Endothelial cell of umbilical vein (primary cell): ENCODE measurements at regions of chr6 and their contacts with region 1.

Region 1: GRCh38 chr6:31493875-31494694 is 3.9 kb upstream of the MICB start:
- DNase-seq: peak; percentile 86
- H3K4me3 ChIP-seq: peak overlapping the region; percentile 44 to 84 (median 58)
- H3K27ac ChIP-seq: peak overlapping the region; percentile 74
- H3K4me1 ChIP-seq: peaks cover 20% of the 10 kb centered on the region
- H3K27me3 ChIP-seq: no peaks in the 10 kb centered on the region
- CTCF ChIP-seq: peak; percentile 84 to 95
- POLR2A ChIP-seq: no peak

Region 2: DNA sequence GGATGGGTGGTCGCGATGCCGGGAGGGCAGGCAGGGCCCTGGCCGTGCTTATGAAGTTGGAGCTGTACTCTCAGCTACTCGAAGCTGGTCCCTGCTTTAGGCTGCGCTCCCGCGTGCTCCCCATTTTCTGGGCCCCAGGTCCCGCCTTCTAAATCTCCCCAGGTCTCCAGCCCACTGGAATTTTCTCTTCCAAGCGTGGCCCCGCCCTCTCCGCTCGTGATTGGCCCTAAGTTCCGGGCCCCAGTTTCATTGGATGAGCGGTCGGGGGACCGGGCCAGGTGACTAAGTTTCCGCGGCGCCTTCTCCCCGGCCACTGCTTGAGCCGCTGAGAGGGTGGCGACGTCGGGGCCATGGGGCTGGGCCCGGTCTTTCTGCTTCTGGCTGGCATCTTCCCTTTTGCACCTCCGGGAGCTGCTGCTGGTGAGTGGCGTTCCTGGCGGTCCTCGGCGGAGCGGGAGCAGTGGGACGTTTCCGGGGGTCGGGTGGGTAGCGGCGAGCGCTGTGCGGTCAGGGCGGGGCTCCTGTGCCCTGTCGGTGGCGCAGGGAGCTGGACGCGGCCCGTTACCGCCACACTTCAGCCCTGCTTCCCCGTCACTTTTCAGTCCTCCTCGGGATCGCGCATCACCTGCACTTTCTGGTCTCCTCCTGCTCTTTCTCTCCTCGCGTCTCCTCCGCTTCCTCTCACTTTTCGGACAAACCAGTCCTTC is 90.6 kb before region 1 on chr6 and contains the start of gene MICA:
- CTCF ChIA-PET with region 1: interaction called, 4 read pairs
- POLR2A ChIA-PET with region 1: no interaction called
- dilution Hi-C with region 1: no loop called
- intact Hi-C with region 1: loop called (anchors 2 kb)
- DNase-seq: peak; percentile 90
- H3K4me3 ChIP-seq: peak within 1 kb of the TSS; percentile 22 to 57 (median 26)
- H3K27ac ChIP-seq: peak within 1 kb of the TSS; percentile 92
- H3K4me1 ChIP-seq: peaks cover 28% of the 10 kb centered on the region
- H3K27me3 ChIP-seq: no peaks in the 10 kb centered on the region
- CTCF ChIP-seq: no peak
- POLR2A ChIP-seq: peak; percentile 91
- total RNA-seq, gene MICA: 42.5 and 45.2 TPM in 2 replicates

Region 3: DNA sequence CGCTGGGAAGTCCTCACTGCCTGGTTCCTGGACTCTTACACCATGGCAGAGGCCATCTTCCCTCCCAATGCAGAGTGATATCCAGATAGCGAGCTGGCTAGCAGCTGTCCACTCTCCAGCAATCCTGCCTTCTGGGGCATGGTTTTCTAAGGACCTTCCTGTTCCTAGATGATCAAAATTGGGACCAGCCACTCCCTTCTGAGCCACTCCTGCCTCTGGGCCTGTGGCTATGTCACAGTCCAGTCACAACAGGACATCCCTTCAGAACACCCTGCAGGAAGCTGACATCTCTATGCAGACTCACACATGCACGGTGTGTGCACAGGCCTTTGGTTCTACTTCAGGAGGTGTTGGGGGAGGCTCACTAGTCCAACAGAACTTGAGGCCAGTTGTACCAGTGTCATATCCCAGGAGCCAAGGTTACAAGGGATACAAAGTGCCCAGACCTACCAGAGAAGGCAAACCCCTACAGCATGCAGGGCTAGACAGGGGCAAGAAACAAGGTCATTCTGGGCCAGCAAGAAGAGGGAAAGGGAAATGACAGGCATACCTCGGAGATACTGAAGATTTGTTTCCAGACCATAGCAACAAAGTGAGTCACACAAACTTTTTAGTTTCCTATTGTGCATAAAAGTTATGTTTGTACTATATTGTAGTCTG is 32.0 kb after region 1 on chr6:
- CTCF ChIA-PET with region 1: interaction called, 29 read pairs
- POLR2A ChIA-PET with region 1: no interaction called
- dilution Hi-C with region 1: no loop called
- intact Hi-C with region 1: loop called (anchors 1 kb)
- DNase-seq: peak; percentile 80
- H3K4me3 ChIP-seq: no peak overlapping the region
- H3K27ac ChIP-seq: peak overlapping the region; percentile 98
- H3K4me1 ChIP-seq: peaks cover 24% of the 10 kb centered on the region
- H3K27me3 ChIP-seq: no peaks in the 10 kb centered on the region
- CTCF ChIP-seq: no peak
- POLR2A ChIP-seq: no peak

Region 4: DNA sequence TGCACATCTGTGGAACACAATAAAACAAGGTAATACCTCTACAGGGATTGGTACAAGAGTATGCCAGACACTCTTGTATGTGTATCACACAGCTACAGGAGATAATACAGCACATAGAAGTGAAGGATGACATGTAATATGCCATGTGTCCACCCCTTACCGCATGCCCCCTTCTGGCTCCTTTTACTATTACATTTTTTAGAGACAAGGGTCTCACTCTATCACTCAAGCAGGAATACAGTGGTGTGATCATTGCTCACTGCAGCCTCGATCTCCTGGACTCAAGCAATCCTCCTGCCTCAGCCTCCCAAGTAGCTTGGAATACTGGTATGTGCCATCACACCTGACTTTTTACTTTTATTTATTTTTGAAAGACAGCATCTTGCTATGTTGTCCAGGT is 102.9 kb after region 1 on chr6:
- CTCF ChIA-PET with region 1: interaction called, 45 read pairs
- POLR2A ChIA-PET with region 1: no interaction called
- dilution Hi-C with region 1: no loop called
- intact Hi-C with region 1: loop called (anchors 1 kb)
- DNase-seq: peak; percentile 67
- H3K4me3 ChIP-seq: no peak overlapping the region
- H3K27ac ChIP-seq: no peak overlapping the region
- H3K4me1 ChIP-seq: no peaks in the 10 kb centered on the region
- H3K27me3 ChIP-seq: no peaks in the 10 kb centered on the region
- CTCF ChIP-seq: peak; percentile 43 to 47
- POLR2A ChIP-seq: no peak

Region 5: DNA sequence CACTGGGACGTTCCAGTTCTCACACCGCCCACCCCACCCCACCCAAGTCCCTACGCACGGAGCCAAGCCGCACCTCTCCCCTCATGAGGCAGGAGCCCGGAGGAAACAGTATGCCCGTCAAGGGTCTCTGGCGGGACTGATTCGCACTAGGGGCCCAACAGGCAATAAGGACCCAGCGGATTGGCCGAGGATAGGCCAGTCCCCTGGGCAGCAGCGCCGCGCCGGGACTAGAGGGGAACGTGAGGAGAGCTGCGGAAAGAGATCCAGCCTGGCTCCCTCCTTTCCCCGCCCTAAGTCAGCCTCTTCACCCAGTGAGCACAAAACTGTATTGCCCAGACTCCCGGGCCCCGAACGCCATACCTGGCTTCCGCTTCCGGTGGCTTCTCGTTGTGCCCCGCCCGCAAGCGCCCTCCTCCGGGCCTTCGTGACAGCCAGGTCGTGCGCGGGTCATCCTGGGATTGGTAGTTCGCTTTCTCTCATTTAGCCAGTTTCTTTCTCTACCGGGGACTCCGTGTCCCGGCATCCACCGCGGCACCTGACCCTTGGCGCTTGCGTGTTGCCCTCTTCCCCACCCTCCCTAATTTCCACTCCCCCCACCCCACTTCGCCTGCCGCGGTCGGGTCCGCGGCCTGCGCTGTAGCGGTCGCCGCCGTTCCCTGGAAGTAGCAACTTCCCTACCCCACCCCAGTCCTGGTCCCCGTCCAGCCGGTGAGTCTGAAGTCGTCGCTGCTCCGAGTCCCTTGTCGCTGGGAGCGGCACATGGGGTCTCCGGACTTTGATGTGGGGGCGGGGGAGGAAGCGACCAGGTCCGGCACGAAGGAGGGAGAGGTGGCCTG is 171.6 kb after region 1 on chr6 and contains the start of gene CSNK2B:
- CTCF ChIA-PET with region 1: no interaction called
- POLR2A ChIA-PET with region 1: no interaction called
- dilution Hi-C with region 1: no loop called
- intact Hi-C with region 1: loop called (anchors 5 kb)
- DNase-seq: peak; percentile 97
- H3K4me3 ChIP-seq: peak within 1 kb of the TSS; percentile 70 to 94 (median 72)
- H3K27ac ChIP-seq: peak within 1 kb of the TSS; percentile 77
- H3K4me1 ChIP-seq: peaks cover 28% of the 10 kb centered on the region
- H3K27me3 ChIP-seq: no peaks in the 10 kb centered on the region
- CTCF ChIP-seq: peak in 1 of 2 donors; percentile 13
- POLR2A ChIP-seq: peak; percentile 54
- total RNA-seq, gene CSNK2B: 206 and 214 TPM in 2 replicates